Posterior vena cava (tissue), 2 donors: ENCODE measurements at regions of chr10 and their contacts with region 1.

Region 1: GRCh38 chr10:85946713-85947326 is 419.8 kb downstream of the GRID1 start:
- DNase-seq: no peak

Region 2: DNA sequence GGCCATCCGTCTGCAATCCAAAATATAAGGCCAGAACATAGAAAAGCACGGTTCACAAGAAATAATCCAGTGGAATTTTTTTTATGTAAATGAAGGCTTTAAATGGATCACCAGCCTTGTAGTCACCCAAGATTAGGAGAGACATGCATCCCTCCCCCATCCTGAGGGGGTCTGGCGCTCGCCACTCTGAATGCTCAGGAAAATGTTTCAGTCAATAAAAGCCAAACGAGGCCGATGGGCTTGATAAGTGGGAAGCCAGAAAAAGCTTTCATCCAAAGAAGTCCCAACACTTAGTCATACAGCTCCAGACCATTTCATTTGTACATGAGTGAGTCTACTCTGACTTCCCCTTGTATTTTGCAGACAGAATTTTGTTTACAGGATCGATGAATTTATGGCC is 212.0 kb before region 1 on chr10:
- intact Hi-C with region 1: no loop called
- DNase-seq: no peak

Region 3: GRCh38 chr10:85927952-85928665 is 18.7 kb before region 1 on chr10:
- intact Hi-C with region 1: loop called in 1 of 2 experiments (anchors 1 kb)
- DNase-seq: no peak

Region 4: DNA sequence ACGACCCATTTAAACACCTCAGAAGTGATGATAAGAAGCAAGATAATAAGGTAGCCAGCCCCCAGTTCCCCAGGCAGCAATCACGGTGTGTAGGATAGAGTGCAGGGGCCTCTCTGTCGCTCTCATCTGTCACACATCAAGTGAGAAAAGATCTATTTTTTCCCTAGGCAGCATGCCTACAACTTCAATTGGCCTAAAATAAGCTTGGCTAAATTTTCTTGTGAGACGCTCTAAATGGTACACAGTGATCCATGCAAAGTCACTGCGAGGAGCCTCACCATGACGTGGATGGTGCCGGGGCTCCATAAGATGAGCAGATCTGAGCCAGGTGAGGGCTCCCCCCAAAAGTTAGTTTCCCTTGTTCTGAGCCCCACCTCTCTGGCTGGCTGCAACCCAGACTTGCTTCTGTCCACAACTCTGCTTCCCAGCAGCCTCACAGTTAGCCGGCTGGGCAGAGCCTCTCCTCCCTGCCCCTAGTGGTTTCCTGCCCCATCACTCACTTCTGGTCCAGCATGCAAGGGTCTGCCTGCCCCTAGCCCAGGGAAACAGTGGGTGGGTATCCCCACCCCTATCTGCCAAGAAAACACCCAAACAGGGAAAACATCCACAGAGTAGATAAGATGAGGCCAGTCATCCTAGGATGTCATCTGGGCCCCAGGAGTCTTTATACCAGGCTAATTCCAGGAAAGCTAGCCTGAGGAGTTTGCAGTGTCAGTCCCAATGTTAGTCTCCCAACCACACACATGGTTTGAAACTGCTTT is 77.6 kb after region 1 on chr10:
- intact Hi-C with region 1: no loop called
- DNase-seq: no peak

Region 5: GRCh38 chr10:86060386-86061277 is 113.8 kb after region 1 on chr10:
- intact Hi-C with region 1: no loop called
- DNase-seq: no peak

Region 6: DNA sequence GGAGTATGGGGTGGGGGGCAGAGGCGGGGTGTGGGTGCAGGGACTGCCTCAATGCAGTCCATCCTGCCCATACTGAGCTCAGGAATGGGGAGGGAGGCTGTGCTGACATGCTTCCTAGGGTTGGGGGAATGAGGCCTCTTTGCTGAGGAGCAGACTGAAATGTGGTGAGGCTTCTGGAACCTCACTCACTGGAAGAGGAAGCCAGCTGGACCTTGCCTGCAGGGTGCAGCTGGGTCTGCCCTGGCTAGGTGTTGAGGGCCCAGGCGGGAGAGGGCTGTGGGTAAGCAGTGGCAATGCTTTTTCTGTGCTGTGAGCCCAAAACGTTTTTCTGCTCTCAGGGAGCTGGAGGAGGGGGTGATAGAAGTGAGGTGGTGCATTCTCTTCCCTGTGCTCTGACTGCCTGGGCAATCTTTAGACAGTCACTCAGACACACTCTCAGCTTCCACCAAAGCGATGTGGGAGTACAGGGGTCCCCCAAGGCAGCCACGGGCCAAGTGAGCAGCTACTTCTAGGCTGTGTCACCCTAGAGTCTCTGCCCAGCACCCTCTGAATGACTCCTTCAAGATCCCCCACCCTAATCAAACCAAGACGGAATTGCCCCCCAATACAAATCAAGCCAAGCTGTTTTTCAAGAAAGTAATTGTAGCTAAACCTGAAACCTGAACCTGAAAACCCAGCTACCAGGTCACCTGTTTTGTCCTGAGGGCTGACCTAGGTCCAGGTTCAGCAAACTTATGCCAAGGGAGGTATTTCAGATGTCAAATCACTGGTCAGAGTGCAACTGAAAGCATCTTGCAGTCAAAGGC is 768.5 kb after region 1 on chr10:
- intact Hi-C with region 1: no loop called
- DNase-seq: no peak